Right lobe of liver (tissue), 6 donors: ENCODE measurements at regions of chr3 and their contacts with region 1.

Region 1: DNA sequence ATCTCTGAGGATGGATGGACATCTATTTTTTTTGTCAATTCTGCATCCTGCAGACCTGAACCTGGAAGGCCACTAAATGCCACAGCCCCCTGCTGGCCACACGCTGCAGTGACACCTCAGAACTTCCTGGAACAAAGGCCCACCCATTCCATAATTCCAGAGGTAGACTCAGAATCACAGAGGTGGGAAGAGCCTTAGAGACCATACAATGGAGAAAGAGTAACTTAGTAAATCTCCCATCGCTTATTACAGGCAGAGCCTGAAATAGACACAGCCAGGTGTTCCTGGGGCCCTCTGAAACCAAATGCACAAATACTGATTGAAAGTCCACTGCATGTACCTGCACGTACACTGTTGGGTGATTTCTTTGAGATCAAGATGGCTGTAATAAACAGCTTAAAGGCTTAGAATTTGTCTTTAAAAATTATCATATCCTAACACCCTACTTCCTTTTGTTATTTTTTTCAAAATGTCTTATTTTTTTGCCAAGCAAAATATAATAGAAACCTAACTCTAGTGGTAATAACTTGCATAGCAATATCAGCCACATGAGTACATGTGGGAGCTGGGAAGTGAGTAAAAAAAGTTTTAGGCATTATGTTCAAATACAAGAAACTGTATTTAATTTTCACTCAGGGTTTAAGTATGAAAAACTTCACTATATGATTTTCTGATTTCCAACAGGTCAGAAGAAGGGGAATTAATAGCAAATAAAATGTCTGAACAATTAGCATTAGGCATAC is 62.7 kb downstream of the EOMES start:
- DNase-seq: peak in 2 of 3 donors; percentile 55 to 59
- ATAC-seq: peak; percentile 84 to 97 (median 86)
- H3K4me3 ChIP-seq: no peak overlapping the region
- H3K27ac ChIP-seq: no peak overlapping the region
- H3K4me1 ChIP-seq: no peaks in the 10 kb centered on the region
- H3K27me3 ChIP-seq: no peaks in the 10 kb centered on the region
- CTCF ChIP-seq: peak; percentile 69 to 85 (median 80)
- POLR2A ChIP-seq: no peak

Region 2: GRCh38 chr3:27095553-27096222 is 563.8 kb before region 1 on chr3:
- intact Hi-C with region 1: no loop called
- DNase-seq: no peak
- ATAC-seq: no peak
- H3K4me3 ChIP-seq: no peak overlapping the region
- H3K27ac ChIP-seq: no peak overlapping the region
- H3K4me1 ChIP-seq: no peaks in the 10 kb centered on the region
- H3K27me3 ChIP-seq: no peaks in the 10 kb centered on the region
- CTCF ChIP-seq: no peak
- POLR2A ChIP-seq: no peak

Region 3: GRCh38 chr3:27484015-27484844 is 175.2 kb before region 1 on chr3 and contains the start of gene SLC4A7:
- intact Hi-C with region 1: no loop called
- DNase-seq: peak; percentile 99
- ATAC-seq: peak; percentile 98 to 99 (median 99)
- H3K4me3 ChIP-seq: peak within 1 kb of the TSS; percentile 73 to 87 (median 86)
- H3K27ac ChIP-seq: peak within 1 kb of the TSS; percentile 61 to 94 (median 79)
- H3K4me1 ChIP-seq: peaks cover 0 to 6% (median 0%) of the 10 kb centered on the region in 4 donors
- H3K27me3 ChIP-seq: no peaks in the 10 kb centered on the region
- CTCF ChIP-seq: peak in 1 of 4 donors; percentile 7
- POLR2A ChIP-seq: peak; percentile 99
- total RNA-seq, gene SLC4A7: 3.0 to 9.9 (median 5.8) TPM

Region 4: GRCh38 chr3:27503526-27503925 is 155.9 kb before region 1 on chr3:
- intact Hi-C with region 1: loop called in 1 of 2 experiments (anchors 10 kb)
- DNase-seq: no peak
- ATAC-seq: no peak
- H3K4me3 ChIP-seq: no peak overlapping the region
- H3K27ac ChIP-seq: no peak overlapping the region
- H3K4me1 ChIP-seq: no peaks in the 10 kb centered on the region
- H3K27me3 ChIP-seq: no peaks in the 10 kb centered on the region
- CTCF ChIP-seq: no peak
- POLR2A ChIP-seq: no peak